Aorta (tissue), 5 donors: ENCODE measurements at regions of chr3 and their contacts with region 1.

Region 1: DNA sequence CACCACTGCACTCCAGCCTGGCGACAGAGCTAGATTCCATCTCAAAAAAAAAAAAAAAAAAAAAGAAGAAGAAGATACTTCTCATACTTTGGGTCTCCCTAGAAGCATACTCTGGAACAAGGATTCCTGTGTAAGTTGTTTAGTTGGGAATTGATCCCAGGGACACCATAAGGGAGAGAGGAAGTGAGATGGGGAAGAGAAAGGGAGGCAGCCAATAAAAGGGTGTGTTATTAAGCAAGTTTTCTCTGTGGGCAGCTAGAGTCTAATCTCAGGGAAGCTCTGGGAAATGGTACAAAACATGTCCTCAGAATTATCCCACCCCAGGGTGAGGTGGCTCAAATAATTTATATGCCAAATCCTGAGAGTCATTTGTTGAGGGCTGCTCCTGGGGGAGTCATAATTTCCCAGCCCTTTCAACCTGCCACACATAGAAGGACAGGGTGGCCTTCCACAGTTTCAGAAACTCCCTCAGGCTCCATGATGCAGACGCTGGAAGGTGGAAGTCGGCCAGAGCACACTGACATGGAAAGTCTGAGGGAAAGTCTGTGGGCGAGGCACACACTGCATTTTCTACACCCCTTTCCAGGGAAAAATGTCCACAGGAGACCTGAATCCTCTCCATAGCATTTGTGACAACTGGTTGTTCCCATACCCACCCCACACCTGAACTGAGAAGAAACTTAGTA is 86.4 kb upstream of the SLC4A7 start:
- DNase-seq: peak; percentile 66 to 83
- ATAC-seq: peak; percentile 80
- H3K4me3 ChIP-seq: no peak overlapping the region
- H3K27ac ChIP-seq: peak overlapping the region; percentile 86 to 87
- H3K4me1 ChIP-seq: peaks cover 0 to 5% of the 10 kb centered on the region in 2 donors
- H3K27me3 ChIP-seq: no peaks in the 10 kb centered on the region

Region 2: GRCh38 chr3:27507515-27508202 is 62.9 kb before region 1 on chr3:
- intact Hi-C with region 1: no loop called
- DNase-seq: no peak
- ATAC-seq: no peak
- H3K4me3 ChIP-seq: no peak overlapping the region
- H3K27ac ChIP-seq: no peak overlapping the region
- H3K4me1 ChIP-seq: peaks cover 0 to 3% of the 10 kb centered on the region in 2 donors
- H3K27me3 ChIP-seq: no peaks in the 10 kb centered on the region

Region 3: DNA sequence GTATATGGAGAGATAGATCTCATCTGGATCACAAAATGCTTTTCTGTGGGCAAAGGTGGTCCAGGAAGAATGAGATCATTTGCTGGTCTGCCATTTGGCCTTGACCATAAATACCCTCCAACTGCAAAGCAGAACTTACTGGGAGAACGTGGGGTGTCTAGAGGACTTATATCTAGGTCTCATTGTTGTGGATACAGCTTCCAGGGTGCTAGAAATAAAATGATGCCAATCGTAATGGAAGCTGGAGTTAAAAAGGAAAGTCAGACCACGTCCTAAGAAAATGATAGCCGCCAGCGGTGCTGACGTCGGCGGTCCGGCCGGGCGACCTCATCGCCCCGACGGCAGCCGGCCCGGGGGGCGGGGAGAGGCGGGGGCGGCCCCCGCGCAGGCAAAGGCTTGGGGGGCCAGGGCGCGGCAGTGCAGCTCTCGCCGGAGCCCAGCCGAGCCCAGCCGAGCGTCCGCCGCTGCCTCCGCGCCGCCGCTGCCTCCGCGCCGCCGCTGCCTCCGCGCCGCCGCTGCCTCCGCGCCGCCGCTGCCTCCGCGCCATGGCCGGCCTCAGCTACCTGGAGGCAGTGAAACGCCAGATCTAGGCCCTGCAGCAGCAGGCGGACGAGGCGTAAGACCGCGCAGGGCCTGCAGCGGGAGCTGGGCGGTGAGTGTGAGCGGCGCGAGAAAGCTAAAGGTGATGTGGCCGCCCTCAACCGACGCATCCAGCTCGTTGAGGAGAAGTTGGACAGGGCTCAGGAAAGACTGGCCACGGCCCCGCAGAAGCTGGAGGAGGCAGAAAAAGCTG is 62.1 kb after region 1 on chr3:
- intact Hi-C with region 1: loop called in 1 of 2 experiments (anchors 10 kb)
- DNase-seq: peak; percentile 73 to 85
- ATAC-seq: peak; percentile 83
- H3K4me3 ChIP-seq: peak overlapping the region; percentile 52 to 65
- H3K27ac ChIP-seq: peak overlapping the region; percentile 88 to 93
- H3K4me1 ChIP-seq: peaks cover 0 to 2% of the 10 kb centered on the region in 2 donors
- H3K27me3 ChIP-seq: no peaks in the 10 kb centered on the region